Posterior vena cava (tissue), 2 donors: ENCODE measurements at regions of chr6 and their contacts with region 1.

Region 1: DNA sequence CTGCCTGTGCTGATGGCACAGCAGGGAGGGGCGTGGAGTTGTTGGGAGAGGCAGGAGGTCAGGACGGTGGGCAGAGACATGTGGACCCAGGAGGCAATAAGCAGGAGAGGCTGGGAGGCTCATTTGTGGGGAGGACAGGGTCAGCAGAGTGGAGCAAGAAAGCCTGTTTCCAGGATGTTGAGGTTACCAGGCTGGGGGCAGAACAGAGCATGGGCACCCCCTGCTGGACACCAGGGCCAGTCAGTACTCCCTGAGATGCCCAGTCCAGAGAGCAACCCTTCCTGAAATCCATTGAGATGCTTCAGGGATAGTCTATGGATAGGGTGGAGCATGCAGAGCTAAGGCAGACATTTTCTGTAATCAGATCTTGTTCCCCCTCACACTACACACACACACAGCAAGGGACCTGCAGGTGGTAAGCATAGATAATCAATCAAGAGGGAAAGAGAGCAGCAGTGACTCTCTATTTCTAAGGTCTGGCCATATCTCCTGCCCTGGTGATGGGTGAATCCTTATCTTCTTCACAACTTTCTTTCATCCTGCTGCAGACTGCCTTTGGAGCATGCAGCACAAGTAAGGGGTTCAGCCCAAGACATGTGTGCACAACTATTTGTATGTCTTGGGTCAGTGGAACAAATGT is 41.7 kb downstream of the MOCS1 start:
- DNase-seq: peak; percentile 92

Region 2: GRCh38 chr6:38955861-38956260 is 936.7 kb before region 1 on chr6:
- intact Hi-C with region 1: loop called in 1 of 2 experiments (anchors 5 kb)
- DNase-seq: no peak

Region 3: DNA sequence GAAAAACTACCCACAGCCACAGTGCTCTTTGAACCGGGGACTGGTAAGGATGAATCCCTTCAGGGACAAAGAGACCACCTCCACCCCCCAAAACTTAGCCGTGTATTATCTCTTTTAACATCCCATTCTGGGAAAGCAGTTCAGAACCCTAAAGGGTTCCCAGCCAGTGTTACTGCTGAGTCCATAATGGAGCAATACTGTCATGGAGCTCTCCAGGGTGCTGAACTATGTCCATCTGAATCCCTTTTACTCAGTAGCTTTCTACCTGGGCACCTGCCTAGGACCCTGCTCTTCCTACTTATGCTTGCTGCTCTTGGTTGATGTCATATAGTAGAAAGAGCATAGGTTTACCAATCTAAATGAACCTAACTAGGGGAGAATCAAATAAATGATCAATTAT is 755.4 kb before region 1 on chr6:
- intact Hi-C with region 1: no loop called
- DNase-seq: no peak

Region 4: GRCh38 chr6:39361657-39362486 is 530.7 kb before region 1 on chr6:
- intact Hi-C with region 1: loop called (anchors 10 kb)
- DNase-seq: peak; percentile 88

Region 5: DNA sequence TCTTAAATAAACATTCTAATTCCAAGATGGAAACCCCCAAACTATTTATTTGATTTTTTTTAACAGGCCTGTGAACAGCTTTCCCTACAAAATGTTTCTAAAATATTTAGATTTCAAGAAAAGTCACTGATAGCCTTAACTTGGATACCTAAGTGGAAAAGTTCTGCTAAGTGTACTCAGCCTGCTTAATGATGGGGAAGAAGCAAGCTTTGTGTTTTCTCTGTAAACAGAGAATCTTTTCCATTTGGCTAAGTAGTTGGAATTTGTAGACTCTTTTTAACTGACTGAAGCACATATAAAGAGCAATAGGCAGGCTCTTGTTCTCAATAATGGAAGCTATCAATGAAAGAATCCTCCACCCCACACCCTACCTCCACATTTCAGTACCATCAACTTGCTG is 275.6 kb before region 1 on chr6:
- intact Hi-C with region 1: no loop called
- DNase-seq: no peak